Endothelial cell of umbilical vein (primary cell): ENCODE measurements at regions of chr9 and their contacts with region 1.

Region 1: GRCh38 chr9:131270171-131271015 is 5.9 kb downstream of the FAM78A start:
- DNase-seq: peak; percentile 73
- H3K4me3 ChIP-seq: no peak overlapping the region
- H3K27ac ChIP-seq: peak overlapping the region; percentile 67
- H3K4me1 ChIP-seq: peaks cover 54% of the 10 kb centered on the region
- H3K27me3 ChIP-seq: no peaks in the 10 kb centered on the region
- CTCF ChIP-seq: no peak
- POLR2A ChIP-seq: no peak

Region 2: GRCh38 chr9:131255676-131256197 is 14.7 kb before region 1 on chr9:
- CTCF ChIA-PET with region 1: interaction called, 10 read pairs
- POLR2A ChIA-PET with region 1: interaction called, 3 read pairs
- dilution Hi-C with region 1: no loop called
- intact Hi-C with region 1: no loop called
- DNase-seq: no peak
- H3K4me3 ChIP-seq: no peak overlapping the region
- H3K27ac ChIP-seq: no peak overlapping the region
- H3K4me1 ChIP-seq: peaks cover 7% of the 10 kb centered on the region
- H3K27me3 ChIP-seq: no peaks in the 10 kb centered on the region
- CTCF ChIP-seq: no peak
- POLR2A ChIP-seq: no peak